Caco-2 (cell line): ENCODE measurements at regions of chr9 and their contacts with region 1.

Region 1: GRCh38 chr9:135864447-135865049 is 42.8 kb downstream of the CAMSAP1 start:
- DNase-seq: peak; percentile 64 to 74
- H3K4me3 ChIP-seq: no peak overlapping the region
- H3K4me3 Mint-ChIP-seq: no peak overlapping the region
- H3K27ac Mint-ChIP-seq: no peak overlapping the region
- H3K4me1 ChIP-seq: no peaks in the 10 kb centered on the region
- H3K4me1 Mint-ChIP-seq: no peaks in the 10 kb centered on the region
- H3K27me3 ChIP-seq: no peaks in the 10 kb centered on the region
- H3K27me3 Mint-ChIP-seq: no peaks in the 10 kb centered on the region
- CTCF ChIP-seq: peak; percentile 88 to 90

Region 2: DNA sequence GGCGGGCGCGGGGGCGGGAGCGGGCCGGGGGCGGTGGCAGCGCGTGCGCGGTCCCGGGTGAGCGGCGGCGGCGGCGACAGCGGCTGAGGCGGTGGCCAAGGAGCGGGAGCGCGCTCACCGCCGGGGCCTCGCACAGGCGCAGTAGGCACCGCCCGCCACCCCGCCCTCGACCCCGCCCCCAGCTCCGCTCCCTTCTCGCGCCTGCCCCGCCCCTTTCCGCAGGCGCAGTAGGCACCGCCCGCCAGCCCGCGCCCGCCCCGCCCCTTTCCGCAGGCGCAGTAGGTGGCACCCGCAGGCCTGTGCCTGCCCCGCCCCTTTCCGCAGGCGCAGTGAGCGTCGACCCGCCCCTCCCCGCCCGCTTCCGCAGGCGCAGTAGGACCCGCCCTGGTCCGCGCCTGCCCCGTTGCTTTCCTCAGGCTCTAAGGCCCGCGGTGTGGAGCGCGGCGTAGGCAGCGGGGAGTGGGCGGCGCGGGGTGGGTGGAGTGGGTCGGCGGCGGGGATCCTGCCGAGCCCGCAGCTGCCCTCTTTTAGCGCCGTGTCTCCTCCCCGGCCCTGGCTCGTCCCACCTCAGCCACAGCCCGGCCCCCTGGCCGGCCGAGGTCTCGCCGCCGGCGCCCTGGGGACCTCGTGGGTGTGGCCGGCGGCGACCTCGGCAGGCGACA is 43.0 kb after region 1 on chr9 and contains the start of gene CAMSAP1:
- CTCF ChIA-PET with region 1: interaction called, 5 read pairs
- POLR2A ChIA-PET with region 1: no interaction called
- intact Hi-C with region 1: loop called (anchors 5 kb)
- DNase-seq: peak; percentile 92 to 95
- H3K4me3 ChIP-seq: peak within 1 kb of the TSS; percentile 77
- H3K4me3 Mint-ChIP-seq: peak within 1 kb of the TSS; percentile 75
- H3K27ac Mint-ChIP-seq: peak within 1 kb of the TSS; percentile 26
- H3K4me1 ChIP-seq: peaks cover 21% of the 10 kb centered on the region; the same call in 1 of the 2 replicates
- H3K4me1 Mint-ChIP-seq: peaks cover 20% of the 10 kb centered on the region
- H3K27me3 ChIP-seq: no peaks in the 10 kb centered on the region
- H3K27me3 Mint-ChIP-seq: no peaks in the 10 kb centered on the region
- CTCF ChIP-seq: no peak
- total RNA-seq, gene CAMSAP1: 31.3 and 38.2 TPM in 2 replicates

Region 3: DNA sequence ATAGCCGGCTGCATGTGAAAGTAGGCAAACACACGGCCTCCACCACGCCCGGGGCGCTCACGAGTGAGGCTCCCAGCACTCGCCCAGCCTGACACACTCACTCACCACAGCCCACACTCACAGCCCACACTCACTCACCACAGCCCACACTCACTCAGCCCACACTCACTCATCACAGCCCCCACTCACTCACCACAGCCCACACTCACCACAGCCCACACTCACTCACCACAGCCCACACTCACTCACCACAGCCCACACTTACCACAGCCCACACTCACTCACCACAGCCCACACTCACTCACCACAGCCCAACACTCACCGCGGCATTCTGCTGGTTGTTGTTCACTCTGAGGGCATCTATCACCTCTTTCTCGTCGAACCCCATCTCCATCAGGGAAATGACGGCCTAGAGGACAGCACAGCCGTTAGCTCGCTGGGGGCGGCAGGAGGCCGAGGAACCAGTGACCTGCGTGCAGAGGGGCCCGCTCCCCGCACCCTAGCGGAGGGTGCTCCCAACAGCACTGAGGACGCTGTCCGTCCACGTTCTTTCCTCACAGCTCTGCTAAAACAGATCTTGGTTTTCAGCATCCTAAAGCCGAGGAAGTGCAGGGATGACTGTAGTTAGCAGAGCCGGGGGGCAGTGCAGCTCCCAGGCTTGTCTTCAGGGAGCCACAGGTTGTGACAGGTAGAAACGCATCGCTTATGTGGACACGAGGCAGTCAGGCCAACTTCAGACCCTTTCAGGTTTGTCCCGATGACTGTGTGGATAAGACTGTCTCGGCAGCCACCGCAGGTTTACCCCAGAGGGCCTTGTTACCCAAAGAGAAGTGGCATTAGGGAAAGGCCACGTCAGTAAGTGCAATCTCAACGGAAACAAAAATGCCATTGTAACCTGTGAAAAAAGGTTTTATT is 75.1 kb after region 1 on chr9:
- CTCF ChIA-PET with region 1: no interaction called
- POLR2A ChIA-PET with region 1: no interaction called
- intact Hi-C with region 1: loop called (anchors 10 kb)
- DNase-seq: no peak
- H3K4me3 ChIP-seq: no peak overlapping the region
- H3K4me3 Mint-ChIP-seq: no peak overlapping the region
- H3K27ac Mint-ChIP-seq: no peak overlapping the region
- H3K4me1 ChIP-seq: no peaks in the 10 kb centered on the region
- H3K4me1 Mint-ChIP-seq: no peaks in the 10 kb centered on the region
- H3K27me3 ChIP-seq: no peaks in the 10 kb centered on the region
- H3K27me3 Mint-ChIP-seq: no peaks in the 10 kb centered on the region
- CTCF ChIP-seq: no peak